HEK293 (cell line): ENCODE measurements at regions of chr19 and their contacts with region 1.

Region 1: DNA sequence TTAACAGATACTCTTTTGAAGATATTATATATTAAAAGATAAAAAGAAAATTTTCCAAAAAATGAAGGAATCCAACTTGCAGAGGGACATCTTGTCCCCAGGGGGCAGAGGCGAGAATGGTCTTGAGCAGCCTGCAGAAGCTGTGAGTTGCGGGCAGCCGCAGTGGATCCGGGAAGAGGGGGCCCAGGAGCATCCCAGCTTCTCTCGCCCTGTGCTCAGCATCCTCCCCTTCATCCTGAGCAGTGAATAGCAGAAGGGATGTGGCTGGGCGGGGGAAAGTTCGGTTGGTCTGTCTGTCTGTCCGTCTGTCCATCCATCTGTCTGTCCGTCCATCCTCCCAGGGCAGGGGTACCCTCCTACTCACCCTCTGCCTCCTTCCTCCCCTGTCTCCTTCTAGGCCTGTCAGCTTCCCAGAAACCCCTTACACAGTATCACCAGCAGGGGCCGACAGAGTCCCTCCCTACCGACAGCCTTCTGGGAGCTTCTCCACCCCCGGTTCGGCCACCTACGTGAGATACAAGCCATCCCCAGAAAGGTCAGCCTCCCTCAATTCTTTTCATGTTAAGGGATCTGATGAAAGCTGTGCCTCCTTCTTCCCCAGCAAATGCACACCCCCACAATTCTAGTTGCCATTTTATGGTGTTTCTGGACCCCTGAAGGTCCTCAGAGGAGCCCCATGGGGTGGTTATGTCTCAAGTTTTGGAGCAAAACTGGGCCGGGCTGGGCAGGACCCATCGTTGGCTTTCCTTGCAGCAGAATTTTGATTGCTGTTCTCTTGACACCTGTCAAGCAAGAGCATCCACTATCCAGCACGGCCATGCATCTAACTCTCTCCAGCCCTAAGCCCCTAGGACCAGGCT is 81.6 kb downstream of the DPF1 start:
- H3K4me3 ChIP-seq: no peak overlapping the region
- H3K27ac ChIP-seq: no peak overlapping the region
- H3K4me1 ChIP-seq: peaks cover 2% of the 10 kb centered on the region; the same call in 1 of the 2 replicates
- CTCF ChIP-seq: peak; percentile 90

Region 2: GRCh38 chr19:37899966-37900365 is 242.4 kb before region 1 on chr19:
- CTCF ChIA-PET with region 1: interaction called, 27 read pairs
- POLR2A ChIA-PET with region 1: no interaction called
- H3K4me3 ChIP-seq: no peak overlapping the region
- H3K27ac ChIP-seq: no peak overlapping the region
- H3K4me1 ChIP-seq: no peaks in the 10 kb centered on the region
- CTCF ChIP-seq: no peak

Region 3: DNA sequence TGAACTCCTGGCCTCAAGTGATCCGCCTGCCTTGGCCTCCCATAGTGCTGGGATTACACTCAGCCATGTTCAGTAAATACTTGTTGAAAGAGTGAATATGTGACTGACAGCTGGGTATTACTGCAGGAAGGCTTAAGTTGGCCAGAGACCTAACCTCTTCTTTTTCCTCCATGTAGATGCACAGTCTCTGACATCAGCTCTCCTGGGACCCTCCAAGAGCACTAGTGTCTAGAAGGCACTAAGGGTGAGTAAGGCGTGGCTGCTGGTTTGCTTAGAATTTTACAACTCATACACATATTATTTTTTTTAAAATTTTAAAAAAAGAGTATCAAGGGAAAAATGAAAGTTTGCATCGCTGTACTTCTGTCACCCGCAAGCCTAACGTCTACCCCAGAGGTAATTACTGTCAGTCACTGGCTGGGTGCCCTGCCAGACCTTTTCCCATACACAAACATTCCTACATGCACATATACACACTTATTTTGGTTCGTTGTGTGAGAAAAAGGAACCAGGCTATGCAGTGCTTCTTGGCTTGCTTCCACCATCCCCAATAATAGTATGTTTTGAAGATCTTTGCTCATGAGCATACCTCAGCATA is 113.4 kb before region 1 on chr19:
- CTCF ChIA-PET with region 1: no interaction called
- POLR2A ChIA-PET with region 1: no interaction called
- H3K4me3 ChIP-seq: no peak overlapping the region
- H3K27ac ChIP-seq: no peak overlapping the region
- H3K4me1 ChIP-seq: peaks cover 2% of the 10 kb centered on the region; the same call in 1 of the 2 replicates
- CTCF ChIP-seq: no peak

Region 4: GRCh38 chr19:38152461-38153379 is 10.3 kb after region 1 on chr19:
- CTCF ChIA-PET with region 1: interaction called, 51 read pairs
- POLR2A ChIA-PET with region 1: interaction called, 7 read pairs
- H3K4me3 ChIP-seq: no peak overlapping the region
- H3K27ac ChIP-seq: no peak overlapping the region
- H3K4me1 ChIP-seq: no peaks in the 10 kb centered on the region
- CTCF ChIP-seq: no peak

Region 5: GRCh38 chr19:38183251-38183897 is 41.0 kb after region 1 on chr19:
- CTCF ChIA-PET with region 1: interaction called, 12 read pairs
- POLR2A ChIA-PET with region 1: no interaction called
- H3K4me3 ChIP-seq: no peak overlapping the region
- H3K27ac ChIP-seq: peak overlapping the region; percentile 31; the same call in 1 of the 2 replicates
- H3K4me1 ChIP-seq: 0 out of 2 replicates have a peak, but pooled peaks cover 2% of the 10 kb centered on the region
- CTCF ChIP-seq: no peak

Region 6: GRCh38 chr19:38229585-38230073 is 87.2 kb after region 1 on chr19:
- CTCF ChIA-PET with region 1: interaction called, 31 read pairs
- POLR2A ChIA-PET with region 1: interaction called, 5 read pairs
- H3K4me3 ChIP-seq: peak overlapping the region; percentile 40
- H3K27ac ChIP-seq: no peak overlapping the region
- H3K4me1 ChIP-seq: peaks cover 10% of the 10 kb centered on the region
- CTCF ChIP-seq: peak; percentile 51